ENCODE measurements at regions of chr1 and their contacts with region 1.

Region 1: GRCh38 chr1:100710906-100711682 is 8.4 kb upstream of the VCAM1 start:
- DNase-seq: peak in 1 of 2 experiments; percentile 52
- H3K4me3 ChIP-seq: no peak overlapping the region
- H3K27ac ChIP-seq: no peak overlapping the region
- H3K4me1 ChIP-seq: peaks cover 60% of the 10 kb centered on the region
- H3K27me3 ChIP-seq: no peaks in the 10 kb centered on the region
- CTCF ChIP-seq: no peak

Region 2: DNA sequence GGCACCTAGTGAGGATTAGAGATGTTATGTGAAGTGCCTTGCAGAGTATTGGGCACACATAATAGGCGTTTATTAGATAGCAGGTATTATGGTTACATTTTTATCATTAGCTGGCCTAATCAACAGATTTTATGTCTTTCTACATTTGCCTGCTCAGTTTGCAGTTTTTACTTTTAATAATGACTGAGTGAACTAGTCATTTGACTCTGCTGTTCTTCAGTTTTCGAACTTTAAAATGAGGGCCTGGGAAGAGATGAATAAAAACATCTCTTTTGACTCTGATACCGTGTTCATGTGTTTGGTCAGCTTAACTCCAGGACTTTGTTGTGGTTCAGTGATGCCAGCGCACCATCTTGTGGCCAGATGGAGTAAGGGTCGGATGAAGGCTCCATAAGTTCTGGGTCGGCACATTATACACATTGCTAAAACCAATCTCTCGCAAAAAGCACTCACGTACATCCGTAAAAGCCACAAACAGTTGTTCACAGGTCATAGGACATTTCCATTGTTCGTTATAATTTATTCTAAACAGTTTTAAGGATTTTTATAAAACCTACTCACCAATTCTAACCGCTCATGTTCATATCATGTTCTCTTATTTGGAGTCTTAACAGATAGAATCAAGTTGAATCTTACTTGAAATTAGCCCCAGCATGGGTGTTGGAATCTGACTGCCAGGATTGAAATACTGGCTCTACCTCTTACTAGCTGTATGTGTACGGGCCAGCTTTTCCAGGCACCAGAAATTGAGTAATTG is 251.6 kb before region 1 on chr1:
- CTCF ChIA-PET with region 1: no interaction called
- POLR2A ChIA-PET with region 1: no interaction called
- intact Hi-C with region 1: no loop called
- DNase-seq: peak; percentile 65 to 66
- H3K4me3 ChIP-seq: no peak overlapping the region
- H3K27ac ChIP-seq: no peak overlapping the region
- H3K4me1 ChIP-seq: no peaks in the 10 kb centered on the region
- H3K27me3 ChIP-seq: no peaks in the 10 kb centered on the region
- CTCF ChIP-seq: peak; percentile 94

Region 3: DNA sequence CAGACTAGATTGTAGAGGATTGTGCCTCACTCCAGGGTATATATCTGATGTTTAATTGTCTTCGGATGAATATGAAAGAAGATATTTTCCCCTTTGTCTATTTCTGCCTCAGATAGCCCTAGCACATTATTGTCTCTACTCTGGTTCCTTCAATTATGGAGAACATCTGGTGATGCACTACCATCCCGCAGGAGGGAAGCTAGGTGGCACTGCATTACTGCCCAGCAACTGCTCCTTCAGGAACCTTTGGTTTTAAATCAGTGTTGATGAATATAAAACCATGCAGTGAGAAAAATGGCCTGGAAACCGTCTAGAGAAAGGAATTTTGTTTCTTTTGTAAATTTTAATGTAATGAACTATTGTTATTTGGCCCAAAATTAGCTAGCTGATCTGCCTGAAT is 104.7 kb before region 1 on chr1:
- CTCF ChIA-PET with region 1: no interaction called
- POLR2A ChIA-PET with region 1: no interaction called
- intact Hi-C with region 1: loop called (anchors 5 kb)
- DNase-seq: peak; percentile 22 to 70
- H3K4me3 ChIP-seq: no peak overlapping the region
- H3K27ac ChIP-seq: no peak overlapping the region
- H3K4me1 ChIP-seq: no peaks in the 10 kb centered on the region
- H3K27me3 ChIP-seq: no peaks in the 10 kb centered on the region
- CTCF ChIP-seq: peak; percentile 90

Region 4: DNA sequence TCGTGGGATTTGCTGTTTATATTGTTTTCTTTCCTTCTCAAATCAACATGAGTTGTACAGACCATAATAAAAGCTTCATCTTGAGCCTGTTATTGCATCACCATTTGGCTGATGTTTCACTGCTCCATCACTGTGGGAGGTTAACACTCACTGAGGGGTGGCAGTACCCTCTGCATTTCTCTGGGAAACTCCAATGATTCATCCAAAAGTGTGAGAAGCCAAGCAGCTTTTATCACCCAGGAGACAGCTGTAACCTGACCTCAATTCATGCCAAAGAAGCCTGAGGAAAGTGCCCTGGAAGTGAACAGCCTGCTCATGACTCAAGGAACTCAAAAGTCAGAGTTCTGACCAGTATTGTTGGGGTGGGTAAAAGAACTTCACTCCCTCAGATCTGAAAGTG is 89.1 kb before region 1 on chr1:
- CTCF ChIA-PET with region 1: no interaction called
- POLR2A ChIA-PET with region 1: no interaction called
- intact Hi-C with region 1: loop called (anchors 2 kb)
- DNase-seq: peak; percentile 44 to 99
- H3K4me3 ChIP-seq: no peak overlapping the region
- H3K27ac ChIP-seq: peak overlapping the region; percentile 96
- H3K4me1 ChIP-seq: peaks cover 60% of the 10 kb centered on the region
- H3K27me3 ChIP-seq: no peaks in the 10 kb centered on the region
- CTCF ChIP-seq: no peak

Region 5: GRCh38 chr1:100661176-100661575 is 49.9 kb before region 1 on chr1:
- CTCF ChIA-PET with region 1: no interaction called
- POLR2A ChIA-PET with region 1: no interaction called
- intact Hi-C with region 1: no loop called
- DNase-seq: peak in 1 of 2 experiments; percentile 23
- H3K4me3 ChIP-seq: no peak overlapping the region
- H3K27ac ChIP-seq: no peak overlapping the region
- H3K4me1 ChIP-seq: no peaks in the 10 kb centered on the region
- H3K27me3 ChIP-seq: no peaks in the 10 kb centered on the region
- CTCF ChIP-seq: no peak

Region 6: DNA sequence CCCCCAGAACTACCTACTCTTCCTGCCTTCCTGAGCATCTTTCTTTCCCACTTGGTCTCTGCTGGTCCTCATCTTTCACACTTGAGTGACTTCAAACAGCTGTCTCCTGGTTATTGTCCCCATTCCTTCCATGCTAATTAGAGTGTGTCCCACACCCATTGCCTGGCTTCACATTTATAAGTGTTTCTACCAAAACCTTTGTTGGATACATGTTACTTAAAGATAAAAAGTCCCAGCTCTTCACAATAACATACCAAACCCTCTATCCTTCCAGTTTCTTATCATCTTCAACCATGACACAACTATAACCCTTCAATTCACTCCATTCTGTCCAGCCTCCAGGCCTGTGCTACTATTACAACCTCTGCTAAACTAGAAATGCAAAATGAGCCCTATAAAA is 49.4 kb after region 1 on chr1:
- CTCF ChIA-PET with region 1: no interaction called
- POLR2A ChIA-PET with region 1: no interaction called
- intact Hi-C with region 1: no loop called
- DNase-seq: no peak
- H3K4me3 ChIP-seq: no peak overlapping the region
- H3K27ac ChIP-seq: no peak overlapping the region
- H3K4me1 ChIP-seq: no peaks in the 10 kb centered on the region
- H3K27me3 ChIP-seq: no peaks in the 10 kb centered on the region
- CTCF ChIP-seq: no peak

Region 7: GRCh38 chr1:100866041-100866900 is 155.2 kb after region 1 on chr1:
- CTCF ChIA-PET with region 1: no interaction called
- POLR2A ChIA-PET with region 1: no interaction called
- intact Hi-C with region 1: loop called (anchors 5 kb)
- DNase-seq: peak in 1 of 2 experiments; percentile 59
- H3K4me3 ChIP-seq: no peak overlapping the region
- H3K27ac ChIP-seq: no peak overlapping the region
- H3K4me1 ChIP-seq: 0 out of 2 replicates have a peak, but pooled peaks cover 4% of the 10 kb centered on the region
- H3K27me3 ChIP-seq: no peaks in the 10 kb centered on the region
- CTCF ChIP-seq: peak; percentile 91

Region 8: GRCh38 chr1:102045752-102046151 is 1334.7 kb after region 1 on chr1:
- CTCF ChIA-PET with region 1: no interaction called
- POLR2A ChIA-PET with region 1: no interaction called
- intact Hi-C with region 1: no loop called
- DNase-seq: no peak
- H3K4me3 ChIP-seq: no peak overlapping the region
- H3K27ac ChIP-seq: no peak overlapping the region
- H3K4me1 ChIP-seq: no peaks in the 10 kb centered on the region
- H3K27me3 ChIP-seq: no peaks in the 10 kb centered on the region
- CTCF ChIP-seq: no peak

Measured in PC-9 (cell line).